ENCODE measurements at regions of chr11 and their contacts with region 1.

Region 1: GRCh38 chr11:35617687-35618496 is at the start of gene FJX1:
- DNase-seq: no peak
- ATAC-seq: peak; percentile 65
- H3K4me3 ChIP-seq: peak within 1 kb of the TSS; percentile 49 to 60
- H3K27ac ChIP-seq: peak within 1 kb of the TSS; percentile 76
- H3K4me1 ChIP-seq: peaks cover 13 to 59% of the 10 kb centered on the region in 2 experiments; a peak in 3 of 4 replicates
- H3K27me3 ChIP-seq: 0 out of 2 replicates have a peak, but pooled peaks cover 4% of the 10 kb centered on the region
- CTCF ChIP-seq: no peak
- POLR2A ChIP-seq: peak; percentile 4
- RAD21 ChIP-seq: no peak
- total RNA-seq, gene FJX1: 13.7 TPM

Region 2: GRCh38 chr11:35376613-35377012 is 241.3 kb before region 1 on chr11:
- CTCF ChIA-PET with region 1: no interaction called
- POLR2A ChIA-PET with region 1: no interaction called
- RAD21 ChIA-PET with region 1: no interaction called
- intact Hi-C with region 1: no loop called
- DNase-seq: no peak
- ATAC-seq: no peak
- H3K4me3 ChIP-seq: no peak overlapping the region
- H3K27ac ChIP-seq: no peak overlapping the region
- H3K4me1 ChIP-seq: peaks cover 8 to 18% of the 10 kb centered on the region in 2 experiments; a peak in 3 of 4 replicates
- H3K27me3 ChIP-seq: no peaks in the 10 kb centered on the region
- CTCF ChIP-seq: no peak
- POLR2A ChIP-seq: no peak
- RAD21 ChIP-seq: no peak

Region 3: GRCh38 chr11:35629914-35630313 is 12.0 kb after region 1 on chr11:
- CTCF ChIA-PET with region 1: no interaction called
- POLR2A ChIA-PET with region 1: no interaction called
- RAD21 ChIA-PET with region 1: no interaction called
- intact Hi-C with region 1: no loop called
- DNase-seq: peak; percentile 86
- ATAC-seq: peak; percentile 91
- H3K4me3 ChIP-seq: peak overlapping the region in 1 of 2 experiments; percentile 8; a peak in 2 of 4 replicates
- H3K27ac ChIP-seq: no peak overlapping the region
- H3K4me1 ChIP-seq: peaks cover 13 to 26% of the 10 kb centered on the region in 2 experiments
- H3K27me3 ChIP-seq: no peaks in the 10 kb centered on the region
- CTCF ChIP-seq: no peak
- POLR2A ChIP-seq: no peak
- RAD21 ChIP-seq: no peak; the same call in 1 of the 2 replicates

Region 4: DNA sequence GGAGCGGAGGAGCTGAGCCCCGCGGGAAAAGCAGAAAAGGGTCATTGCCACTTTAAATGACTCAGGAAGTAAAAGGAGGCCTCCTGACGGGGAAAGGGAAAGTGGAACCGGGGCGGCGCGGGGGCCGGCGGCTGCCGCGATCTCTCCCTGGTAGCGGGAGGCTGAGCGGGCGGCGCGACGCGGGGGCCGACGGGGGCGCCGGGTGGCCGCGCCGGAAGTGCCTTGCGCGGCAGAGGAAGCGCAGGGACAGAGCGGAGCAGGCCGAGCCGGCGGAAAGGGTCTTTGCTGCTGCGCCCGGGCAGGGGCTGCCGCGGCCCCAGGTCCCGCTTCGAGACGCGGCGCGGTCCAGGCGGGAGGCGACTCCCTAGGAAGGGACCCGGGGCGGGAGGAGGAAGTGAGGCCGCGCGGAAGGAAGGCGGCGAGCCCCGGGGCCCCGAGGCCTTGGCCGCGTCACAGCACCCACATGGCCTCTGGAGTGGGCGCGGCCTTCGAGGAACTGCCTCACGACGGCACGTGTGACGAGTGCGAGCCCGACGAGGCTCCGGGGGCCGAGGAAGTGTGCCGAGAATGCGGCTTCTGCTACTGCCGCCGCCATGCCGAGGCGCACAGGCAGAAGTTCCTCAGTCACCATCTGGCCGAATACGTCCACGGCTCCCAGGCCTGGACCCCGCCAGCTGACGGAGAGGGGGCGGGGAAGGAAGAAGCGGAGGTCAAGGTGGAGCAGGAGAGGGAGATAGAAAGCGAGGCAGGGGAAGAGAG is 44.9 kb after region 1 on chr11 and contains the start of gene TRIM44:
- CTCF ChIA-PET with region 1: no interaction called
- POLR2A ChIA-PET with region 1: no interaction called
- RAD21 ChIA-PET with region 1: no interaction called
- intact Hi-C with region 1: loop called (anchors 2 kb)
- DNase-seq: peak; percentile 37
- ATAC-seq: peak; percentile 85
- H3K4me3 ChIP-seq: peak within 1 kb of the TSS; percentile 49 to 71
- H3K27ac ChIP-seq: peak within 1 kb of the TSS; percentile 81
- H3K4me1 ChIP-seq: peaks cover 6 to 24% of the 10 kb centered on the region in 2 experiments; a peak in 3 of 4 replicates
- H3K27me3 ChIP-seq: no peaks in the 10 kb centered on the region
- CTCF ChIP-seq: no peak
- POLR2A ChIP-seq: peak; percentile 58
- RAD21 ChIP-seq: no peak
- total RNA-seq, gene TRIM44: 33.4 TPM

Region 5: GRCh38 chr11:35711173-35711910 is 93.5 kb after region 1 on chr11:
- CTCF ChIA-PET with region 1: no interaction called
- POLR2A ChIA-PET with region 1: no interaction called
- RAD21 ChIA-PET with region 1: no interaction called
- intact Hi-C with region 1: no loop called
- DNase-seq: no peak
- ATAC-seq: no peak
- H3K4me3 ChIP-seq: no peak overlapping the region
- H3K27ac ChIP-seq: no peak overlapping the region
- H3K4me1 ChIP-seq: no peaks in the 10 kb centered on the region
- H3K27me3 ChIP-seq: no peaks in the 10 kb centered on the region
- CTCF ChIP-seq: peak; percentile 12 to 35 (median 13); a peak in 2 of 6 replicates
- POLR2A ChIP-seq: no peak
- RAD21 ChIP-seq: peak; percentile 39

Region 6: DNA sequence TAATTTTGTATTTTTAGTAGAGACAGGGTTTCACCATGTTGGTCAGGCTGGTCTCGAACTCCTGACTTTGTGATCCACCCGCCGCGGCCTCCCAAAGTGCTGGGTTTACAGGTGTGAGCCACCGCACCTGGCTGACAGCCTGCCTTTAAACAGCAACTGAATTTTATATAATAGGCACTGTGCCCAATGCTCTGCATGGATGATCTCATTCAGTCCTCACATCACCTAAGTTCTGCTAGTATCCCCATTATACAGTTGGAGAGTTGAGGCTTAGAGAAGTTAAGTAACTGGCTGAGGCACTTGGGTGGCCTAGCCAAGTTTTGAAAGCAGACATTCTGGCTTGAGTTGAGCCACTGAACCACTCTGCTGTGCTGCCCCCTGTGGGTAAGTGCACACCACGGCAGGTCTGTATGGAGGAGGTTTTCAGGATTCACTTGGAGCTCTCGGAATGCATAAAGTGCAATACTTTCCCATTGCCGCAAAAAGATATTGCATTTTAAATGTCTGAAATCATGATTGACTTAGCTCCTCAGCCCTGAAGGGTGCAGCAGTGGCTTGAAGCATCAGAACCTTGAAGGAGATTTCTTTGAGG is 438.4 kb after region 1 on chr11:
- CTCF ChIA-PET with region 1: interaction called, 3 read pairs
- POLR2A ChIA-PET with region 1: no interaction called
- RAD21 ChIA-PET with region 1: no interaction called
- intact Hi-C with region 1: loop called (anchors 5 kb)
- DNase-seq: no peak
- ATAC-seq: peak; percentile 84
- H3K4me3 ChIP-seq: no peak overlapping the region
- H3K27ac ChIP-seq: no peak overlapping the region
- H3K4me1 ChIP-seq: no peaks in the 10 kb centered on the region
- H3K27me3 ChIP-seq: no peaks in the 10 kb centered on the region
- CTCF ChIP-seq: peak; percentile 45 to 91 (median 81); a peak in 5 of 6 replicates
- POLR2A ChIP-seq: no peak
- RAD21 ChIP-seq: peak; percentile 67

Region 7: DNA sequence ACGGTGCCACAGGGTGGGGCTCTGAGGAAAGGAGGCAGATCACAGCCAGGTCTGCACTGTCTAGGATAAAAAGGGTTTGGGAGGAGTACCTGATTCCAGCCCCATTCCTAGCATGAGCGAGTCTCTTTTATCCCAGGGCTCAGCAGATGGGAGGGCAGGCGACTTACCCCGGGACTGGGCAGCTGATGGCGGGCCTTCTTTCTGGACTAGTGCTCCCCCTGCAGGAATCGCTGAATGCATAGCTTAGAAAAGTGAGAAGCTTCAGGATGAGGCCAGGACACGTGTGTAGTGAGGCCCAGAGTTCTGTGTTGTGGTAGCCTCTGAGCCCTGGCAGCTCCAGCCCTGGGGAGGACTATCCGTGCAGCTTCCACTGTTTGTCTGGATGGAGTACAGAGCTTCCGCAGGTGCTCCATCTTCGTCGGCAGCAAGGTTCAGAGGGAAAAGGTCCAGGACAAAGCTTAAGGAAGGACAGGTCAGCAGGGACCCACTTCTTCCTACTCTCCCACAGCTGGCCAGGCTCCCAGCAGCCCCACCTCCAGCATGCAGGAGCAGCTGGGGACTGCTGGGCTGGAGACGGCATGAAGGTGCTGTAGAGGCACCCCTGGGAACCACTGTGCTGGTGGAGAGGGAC is 641.0 kb after region 1 on chr11:
- CTCF ChIA-PET with region 1: interaction called, 11 read pairs
- POLR2A ChIA-PET with region 1: no interaction called
- RAD21 ChIA-PET with region 1: no interaction called
- intact Hi-C with region 1: loop called (anchors 1 kb)
- DNase-seq: peak; percentile 36
- ATAC-seq: peak; percentile 97
- H3K4me3 ChIP-seq: no peak overlapping the region
- H3K27ac ChIP-seq: no peak overlapping the region
- H3K4me1 ChIP-seq: peaks cover 3 to 20% of the 10 kb centered on the region in 2 experiments; a peak in 3 of 4 replicates
- H3K27me3 ChIP-seq: no peaks in the 10 kb centered on the region
- CTCF ChIP-seq: peak; percentile 78 to 80 (median 78)
- POLR2A ChIP-seq: no peak
- RAD21 ChIP-seq: peak; percentile 87

Region 8: DNA sequence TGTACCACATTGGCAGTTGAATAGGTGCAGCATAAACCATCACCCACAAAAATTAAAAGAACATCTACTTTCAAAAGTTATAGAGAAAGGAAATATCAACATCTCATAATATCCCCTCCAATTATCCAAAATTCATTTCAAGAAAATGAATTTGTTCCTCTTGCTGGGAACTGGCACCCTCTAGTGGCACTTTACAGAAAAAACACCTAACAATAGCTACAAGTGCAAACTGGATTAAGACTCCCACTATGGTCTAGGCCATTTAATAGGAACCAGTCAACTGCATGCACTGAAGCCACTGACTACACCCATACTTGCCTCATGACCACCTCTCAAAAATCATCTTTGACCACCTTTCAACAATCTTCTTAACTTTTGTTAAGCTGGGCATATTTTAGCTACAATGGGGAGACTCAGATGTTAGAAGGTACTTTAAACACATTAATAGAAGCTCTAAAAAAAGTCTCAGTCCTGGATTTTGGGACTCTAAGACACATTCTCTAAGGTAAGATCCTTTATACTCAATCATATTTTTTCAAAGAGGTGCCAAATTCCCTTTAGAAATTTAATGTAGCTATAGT is 874.9 kb after region 1 on chr11:
- CTCF ChIA-PET with region 1: no interaction called
- POLR2A ChIA-PET with region 1: no interaction called
- RAD21 ChIA-PET with region 1: no interaction called
- intact Hi-C with region 1: loop called (anchors 10 kb)
- DNase-seq: peak; percentile 42
- ATAC-seq: peak; percentile 78
- H3K4me3 ChIP-seq: no peak overlapping the region
- H3K27ac ChIP-seq: no peak overlapping the region
- H3K4me1 ChIP-seq: no peaks in the 10 kb centered on the region
- H3K27me3 ChIP-seq: no peaks in the 10 kb centered on the region
- CTCF ChIP-seq: peak; percentile 44 to 88 (median 72); a peak in 5 of 6 replicates
- POLR2A ChIP-seq: no peak
- RAD21 ChIP-seq: peak; percentile 67